ENCODE measurements at regions of chr20 and their contacts with region 1.

Region 1: GRCh38 chr20:50516180-50516934 is 6.2 kb downstream of the PTPN1 start:
- DNase-seq: no peak
- ATAC-seq: peak; percentile 19
- H3K4me3 ChIP-seq: peak overlapping the region; percentile 4
- H3K4me3 Mint-ChIP-seq: peak overlapping the region; percentile 8 to 99 (median 76)
- H3K27ac ChIP-seq: peak overlapping the region; percentile 62
- H3K27ac Mint-ChIP-seq: peak overlapping the region; percentile 44 to 98 (median 88)
- H3K4me1 ChIP-seq: peaks cover 77 to 85% of the 10 kb centered on the region in 2 donors
- H3K4me1 Mint-ChIP-seq: peaks cover 77 to 100% (median 99%) of the 10 kb centered on the region in 7 donors
- H3K27me3 ChIP-seq: no peaks in the 10 kb centered on the region
- H3K27me3 Mint-ChIP-seq: no peaks in the 10 kb centered on the region

Region 2: DNA sequence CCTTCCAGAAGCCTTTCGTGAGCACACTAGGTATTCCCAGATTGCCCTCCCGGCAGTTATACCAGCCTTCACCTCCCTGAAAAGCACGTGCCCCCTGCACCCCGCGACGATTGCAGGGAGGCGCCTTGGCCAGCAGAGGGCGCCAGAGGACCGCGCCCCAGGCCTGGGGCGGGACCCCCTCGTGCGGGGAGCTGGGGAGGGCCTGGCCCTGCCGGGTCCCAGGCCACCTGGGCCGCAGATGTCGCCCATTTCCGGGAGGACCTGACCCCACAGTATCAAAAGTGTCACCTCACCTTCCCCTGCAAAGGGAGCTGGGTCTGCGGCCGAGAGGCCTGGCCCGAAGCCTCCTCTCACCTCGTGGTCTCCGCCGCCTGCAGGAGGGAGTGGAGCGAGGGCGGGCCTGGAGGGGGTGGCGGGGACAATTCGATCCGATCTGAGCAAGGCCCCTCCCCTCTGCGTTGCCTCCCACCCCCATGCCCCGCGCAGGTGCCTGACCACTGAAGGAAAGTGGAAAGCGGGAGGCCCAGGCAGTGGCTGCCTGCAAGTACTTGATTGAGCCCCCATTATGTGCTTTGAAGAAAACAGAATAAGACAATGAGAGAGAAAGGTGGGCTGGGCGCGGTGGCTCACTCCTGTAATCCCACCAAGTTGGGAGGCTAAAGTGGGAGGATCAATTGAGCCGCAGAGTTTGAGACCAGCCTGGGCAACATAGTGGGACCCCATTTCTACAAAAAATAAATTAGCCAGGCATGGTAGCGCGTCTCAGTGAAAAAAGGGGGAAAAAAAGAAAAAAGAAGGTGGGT is 537.1 kb before region 1 on chr20:
- CTCF ChIA-PET with region 1: no interaction called
- POLR2A ChIA-PET with region 1: no interaction called
- intact Hi-C with region 1: no loop called
- DNase-seq: peak; percentile 47 to 82 (median 63)
- ATAC-seq: peak; percentile 65
- H3K4me3 ChIP-seq: no peak overlapping the region
- H3K4me3 Mint-ChIP-seq: peak overlapping the region in 4 of 10 donors; percentile 3 to 43 (median 24)
- H3K27ac ChIP-seq: no peak overlapping the region
- H3K27ac Mint-ChIP-seq: no peak overlapping the region
- H3K4me1 ChIP-seq: peaks cover 11 to 18% of the 10 kb centered on the region in 2 donors
- H3K4me1 Mint-ChIP-seq: peaks cover 12 to 31% (median 25%) of the 10 kb centered on the region in 7 donors
- H3K27me3 ChIP-seq: no peaks in the 10 kb centered on the region
- H3K27me3 Mint-ChIP-seq: peaks cover 0 to 44% (median 0%) of the 10 kb centered on the region in 5 donors

Region 3: GRCh38 chr20:50484276-50484976 is 31.9 kb before region 1 on chr20:
- CTCF ChIA-PET with region 1: interaction called, 5 read pairs
- POLR2A ChIA-PET with region 1: interaction called, 10 read pairs
- intact Hi-C with region 1: loop called (anchors 2 kb)
- DNase-seq: no peak
- ATAC-seq: no peak
- H3K4me3 ChIP-seq: peak overlapping the region; percentile 77
- H3K4me3 Mint-ChIP-seq: peak overlapping the region; percentile 82 to 99 (median 93)
- H3K27ac ChIP-seq: peak overlapping the region; percentile 91
- H3K27ac Mint-ChIP-seq: peak overlapping the region; percentile 92 to 99 (median 96)
- H3K4me1 ChIP-seq: peaks cover 6 to 17% of the 10 kb centered on the region in 2 donors
- H3K4me1 Mint-ChIP-seq: peaks cover 20 to 38% (median 24%) of the 10 kb centered on the region in 7 donors
- H3K27me3 ChIP-seq: no peaks in the 10 kb centered on the region
- H3K27me3 Mint-ChIP-seq: no peaks in the 10 kb centered on the region

Region 4: DNA sequence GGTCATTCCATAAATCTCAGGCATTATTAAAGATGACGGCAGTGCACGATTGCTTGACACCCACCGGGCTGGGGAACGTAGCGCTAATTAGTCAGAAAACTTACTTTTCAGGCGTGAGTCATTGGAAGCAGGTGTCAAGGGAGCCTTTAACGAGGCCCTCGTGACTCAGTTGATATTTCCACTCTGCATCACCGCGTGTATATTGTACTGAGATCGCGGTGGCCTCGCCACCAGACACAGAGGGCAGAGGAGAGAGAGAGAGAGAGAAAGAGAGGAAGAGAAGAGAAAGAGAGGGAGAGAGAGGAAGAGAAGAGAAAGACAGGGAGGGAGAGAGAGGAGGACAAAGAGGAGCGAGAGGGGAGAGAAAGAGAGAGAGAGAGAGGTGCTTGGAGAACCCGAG is 485.4 kb after region 1 on chr20:
- CTCF ChIA-PET with region 1: no interaction called
- POLR2A ChIA-PET with region 1: no interaction called
- intact Hi-C with region 1: no loop called
- DNase-seq: no peak
- ATAC-seq: no peak
- H3K4me3 ChIP-seq: no peak overlapping the region
- H3K4me3 Mint-ChIP-seq: no peak overlapping the region
- H3K27ac ChIP-seq: no peak overlapping the region
- H3K27ac Mint-ChIP-seq: no peak overlapping the region
- H3K4me1 ChIP-seq: no peaks in the 10 kb centered on the region
- H3K4me1 Mint-ChIP-seq: no peaks in the 10 kb centered on the region
- H3K27me3 ChIP-seq: no peaks in the 10 kb centered on the region
- H3K27me3 Mint-ChIP-seq: peaks cover 2 to 50% (median 32%) of the 10 kb centered on the region in 5 donors

Measured in naive thymus-derived CD4-positive, alpha-beta T cell (primary cell).